MCF 10A (cell line): ENCODE measurements at regions of chr12 and their contacts with region 1.

Region 1: DNA sequence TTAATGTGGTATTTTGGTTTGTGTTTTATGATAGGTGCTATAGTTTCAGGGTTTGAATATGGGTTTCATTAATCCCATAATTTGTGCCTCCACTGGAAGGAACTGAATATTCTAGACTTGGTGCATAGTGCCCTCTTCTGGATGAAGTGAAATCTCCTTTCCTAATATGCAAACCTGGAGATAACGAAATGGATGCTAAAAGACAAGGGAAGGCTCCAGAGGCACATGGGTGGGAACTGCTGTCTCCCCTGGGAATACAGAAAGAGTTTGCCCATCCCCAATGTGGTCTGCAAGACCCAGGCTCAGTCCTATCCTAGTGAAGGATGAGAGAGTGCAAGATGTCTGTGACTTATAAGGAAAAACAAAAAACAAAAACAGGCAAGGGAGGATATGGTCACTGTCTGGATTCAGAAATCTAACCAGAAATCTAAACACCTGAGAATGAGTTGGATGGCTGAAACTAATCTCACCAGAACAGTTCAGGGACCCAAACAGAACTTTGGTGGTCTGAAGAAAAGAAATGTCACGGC is 142.3 kb upstream of the TMPO start:
- DNase-seq: peak; percentile 75
- H3K4me3 Mint-ChIP-seq: no peak overlapping the region
- H3K27ac Mint-ChIP-seq: no peak overlapping the region
- H3K4me1 Mint-ChIP-seq: peaks cover 10% of the 10 kb centered on the region
- H3K27me3 Mint-ChIP-seq: peaks cover 38% of the 10 kb centered on the region
- CTCF ChIP-seq: peak; percentile 66

Region 2: GRCh38 chr12:96578526-96579125 is 1794.5 kb before region 1 on chr12:
- CTCF ChIA-PET with region 1: interaction called, 5 read pairs
- POLR2A ChIA-PET with region 1: no interaction called
- intact Hi-C with region 1: loop called (anchors 1 kb)
- DNase-seq: peak; percentile 72
- H3K4me3 Mint-ChIP-seq: no peak overlapping the region
- H3K27ac Mint-ChIP-seq: no peak overlapping the region
- H3K4me1 Mint-ChIP-seq: no peaks in the 10 kb centered on the region
- H3K27me3 Mint-ChIP-seq: no peaks in the 10 kb centered on the region
- CTCF ChIP-seq: peak; percentile 60

Region 3: DNA sequence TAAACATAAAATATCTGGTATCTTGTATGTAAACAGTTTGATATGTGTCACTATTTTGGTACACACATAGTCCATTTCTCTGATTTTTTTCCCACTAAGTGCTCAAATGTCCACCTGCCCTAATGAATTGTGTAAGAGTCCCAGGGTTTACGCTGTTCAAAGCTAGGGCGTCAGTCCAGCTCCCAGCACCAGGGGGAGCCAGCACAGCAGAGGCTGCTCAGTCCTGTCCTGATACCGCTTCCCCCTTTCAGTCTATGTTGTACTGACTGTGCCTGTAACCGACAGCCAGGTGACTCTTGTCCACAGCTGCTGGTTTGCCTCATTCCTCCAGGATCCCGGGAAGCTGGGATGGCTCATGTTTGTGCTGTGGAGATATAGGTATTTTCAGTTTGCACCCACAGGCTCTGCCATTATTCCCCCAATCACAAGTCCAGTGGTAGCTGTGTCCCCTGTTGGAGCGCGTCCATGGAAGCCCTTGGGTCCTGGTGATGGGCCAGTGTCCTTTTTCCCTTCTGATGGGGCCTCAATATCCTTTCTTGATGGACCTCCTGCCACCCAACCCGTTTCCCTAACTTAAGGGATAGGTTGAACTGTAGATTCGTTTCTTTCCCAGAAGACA is 1224.0 kb before region 1 on chr12:
- CTCF ChIA-PET with region 1: no interaction called
- POLR2A ChIA-PET with region 1: no interaction called
- intact Hi-C with region 1: loop called (anchors 5 kb)
- DNase-seq: peak; percentile 53
- H3K4me3 Mint-ChIP-seq: no peak overlapping the region
- H3K27ac Mint-ChIP-seq: no peak overlapping the region
- H3K4me1 Mint-ChIP-seq: no peaks in the 10 kb centered on the region
- H3K27me3 Mint-ChIP-seq: peaks cover 21% of the 10 kb centered on the region
- CTCF ChIP-seq: peak; percentile 64

Region 4: DNA sequence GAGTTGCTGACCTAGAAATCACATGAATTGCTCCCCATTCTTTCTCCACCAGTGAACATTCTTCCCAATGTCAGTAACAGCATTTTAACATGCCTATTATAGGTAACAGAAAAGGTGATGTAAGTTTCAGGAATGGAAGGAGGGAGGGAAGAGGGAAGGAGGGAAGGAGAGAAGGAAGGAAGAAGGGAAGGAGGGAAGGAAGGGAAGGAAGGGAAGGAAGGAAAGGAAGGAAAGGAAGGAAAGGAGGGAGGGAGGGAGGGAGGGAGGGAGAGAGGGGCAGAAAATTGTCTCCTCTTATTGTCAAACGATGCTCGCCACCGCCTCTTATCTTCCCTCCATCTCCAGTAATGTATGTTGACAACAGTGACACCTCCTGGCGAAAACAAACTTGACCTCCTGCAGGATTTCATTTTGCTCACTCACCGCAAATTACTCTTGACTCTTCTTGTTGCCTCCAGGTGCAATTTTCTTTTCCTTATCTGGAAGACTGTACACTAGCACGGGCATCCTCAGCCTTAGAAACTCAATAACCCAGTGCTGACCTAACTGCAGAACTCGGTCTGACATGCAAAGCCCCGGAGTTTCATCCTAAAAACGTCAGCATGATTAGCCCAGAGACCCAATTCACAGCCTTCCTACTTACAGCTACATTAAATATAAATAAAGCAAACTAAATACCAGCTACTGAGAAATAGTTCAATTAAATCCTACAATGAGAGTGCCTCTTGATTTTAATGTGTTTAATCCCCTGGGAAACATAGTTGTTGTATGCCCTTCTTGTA is 370.2 kb before region 1 on chr12:
- CTCF ChIA-PET with region 1: interaction called, 3 read pairs
- POLR2A ChIA-PET with region 1: no interaction called
- intact Hi-C with region 1: loop called (anchors 2 kb)
- DNase-seq: peak; percentile 59
- H3K4me3 Mint-ChIP-seq: no peak overlapping the region
- H3K27ac Mint-ChIP-seq: no peak overlapping the region
- H3K4me1 Mint-ChIP-seq: no peaks in the 10 kb centered on the region
- H3K27me3 Mint-ChIP-seq: peaks cover 22% of the 10 kb centered on the region
- CTCF ChIP-seq: peak; percentile 52

Region 5: DNA sequence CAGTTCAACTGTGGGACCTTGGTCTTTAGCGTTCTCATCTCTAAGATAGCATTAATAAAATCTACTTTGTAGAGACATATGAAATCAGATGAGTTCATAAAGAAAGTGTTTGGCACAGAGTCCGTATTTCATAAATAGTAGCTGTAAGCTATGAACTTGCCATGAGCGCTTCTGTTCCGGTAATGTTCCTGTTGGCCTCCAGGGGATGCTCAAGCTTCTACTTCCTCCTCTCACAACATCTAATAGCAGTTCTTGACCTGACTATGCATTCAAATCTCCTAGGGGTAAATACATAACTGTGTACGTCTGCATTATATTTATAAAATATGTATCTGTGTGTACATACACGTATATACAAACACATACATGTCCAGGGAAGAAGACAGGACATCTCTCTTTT is 145.9 kb before region 1 on chr12:
- CTCF ChIA-PET with region 1: interaction called, 3 read pairs
- POLR2A ChIA-PET with region 1: no interaction called
- intact Hi-C with region 1: loop called (anchors 2 kb)
- DNase-seq: peak; percentile 29
- H3K4me3 Mint-ChIP-seq: no peak overlapping the region
- H3K27ac Mint-ChIP-seq: no peak overlapping the region
- H3K4me1 Mint-ChIP-seq: no peaks in the 10 kb centered on the region
- H3K27me3 Mint-ChIP-seq: peaks cover 51% of the 10 kb centered on the region
- CTCF ChIP-seq: no peak

Region 6: DNA sequence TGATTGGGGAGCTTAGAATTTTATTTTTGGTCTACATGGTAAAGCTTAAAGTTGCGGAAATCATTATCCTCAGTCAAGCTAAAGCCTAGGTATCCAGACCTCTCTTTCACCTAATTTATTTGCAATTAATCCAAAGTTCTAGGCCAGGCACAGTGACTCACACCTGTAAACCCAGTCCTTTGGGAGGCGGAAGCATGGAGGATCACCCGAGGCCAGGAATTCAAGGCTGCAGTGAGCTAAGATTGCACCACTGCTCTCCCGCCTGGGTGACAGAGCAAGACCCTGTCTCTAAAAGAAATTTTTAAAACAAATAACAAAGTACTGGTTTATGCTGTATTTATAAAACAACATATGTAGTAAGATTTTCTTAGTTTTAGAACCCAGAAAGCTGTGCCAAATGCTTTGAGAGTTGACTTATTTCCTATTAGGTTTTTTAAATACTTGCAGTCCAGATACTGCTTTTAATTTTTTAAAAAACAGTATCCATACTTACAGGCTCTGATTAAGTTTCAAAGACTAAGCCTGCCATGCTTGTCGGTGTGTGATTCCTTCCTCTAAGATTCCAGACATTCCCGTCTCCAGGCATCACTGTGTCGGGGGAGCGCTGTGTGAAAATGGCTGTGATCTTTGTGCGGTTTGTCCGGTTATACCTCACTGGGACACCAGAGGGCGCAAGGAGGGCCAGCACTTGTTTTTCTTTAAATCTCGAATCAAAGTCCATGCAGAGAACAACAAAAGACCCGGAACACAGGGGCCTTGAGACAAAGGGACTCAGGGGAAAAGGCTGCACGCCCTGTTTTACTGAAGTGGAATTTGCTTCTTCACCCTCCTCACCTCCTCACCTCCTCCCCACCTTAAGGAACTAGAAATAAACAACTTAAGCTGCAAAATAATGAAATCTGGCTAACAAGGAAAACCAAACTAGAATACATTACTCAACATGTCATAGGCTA is 117.7 kb after region 1 on chr12:
- CTCF ChIA-PET with region 1: no interaction called
- POLR2A ChIA-PET with region 1: no interaction called
- intact Hi-C with region 1: no loop called
- DNase-seq: peak; percentile 86
- H3K4me3 Mint-ChIP-seq: peak overlapping the region; percentile 57
- H3K27ac Mint-ChIP-seq: peak overlapping the region; percentile 54
- H3K4me1 Mint-ChIP-seq: no peaks in the 10 kb centered on the region
- H3K27me3 Mint-ChIP-seq: no peaks in the 10 kb centered on the region
- CTCF ChIP-seq: peak; percentile 81